CD8-positive, alpha-beta T cell (primary cell): ENCODE measurements at regions of chr10 and their contacts with region 1.

Region 1: DNA sequence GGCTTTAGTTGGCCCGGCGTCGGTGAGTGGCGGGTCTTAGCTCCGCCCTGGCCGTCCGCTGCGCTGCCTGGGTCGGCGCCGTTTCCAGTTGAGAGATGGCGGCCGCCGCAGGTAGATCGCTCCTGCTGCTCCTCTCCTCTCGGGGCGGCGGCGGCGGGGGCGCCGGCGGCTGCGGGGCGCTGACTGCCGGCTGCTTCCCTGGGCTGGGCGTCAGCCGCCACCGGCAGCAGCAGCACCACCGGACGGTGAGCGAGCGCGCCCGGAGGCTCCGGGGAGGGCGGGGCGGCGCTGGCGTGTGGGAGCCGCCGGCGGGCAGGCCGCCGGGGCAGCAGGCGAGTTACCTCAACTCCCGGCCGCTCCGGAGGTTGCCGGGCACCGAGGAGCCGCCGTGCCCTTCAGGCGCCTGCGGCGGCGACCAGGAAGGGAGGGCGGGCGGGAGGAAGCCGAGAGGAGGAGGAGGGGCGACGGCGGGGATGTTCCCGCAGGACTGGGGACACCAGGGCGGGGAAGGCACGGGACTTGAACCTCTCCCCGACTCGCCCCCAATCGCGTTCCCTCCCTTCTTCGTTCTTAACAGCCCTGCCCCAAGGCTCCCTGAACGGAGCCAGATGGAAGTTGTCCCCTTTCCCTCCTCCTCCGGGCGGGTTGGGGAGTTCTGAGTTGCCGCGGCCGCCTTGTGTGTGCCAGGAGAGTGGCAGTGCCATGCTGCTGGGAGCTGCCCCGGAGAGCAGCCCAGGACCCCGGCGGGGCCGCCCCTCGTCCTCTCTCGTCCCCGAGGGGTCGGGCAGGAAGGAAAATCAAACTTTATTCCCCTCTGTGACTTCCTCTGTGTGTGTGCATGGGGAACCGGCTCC is at the start of gene MCU:
- DNase-seq: peak; percentile 85 to 96 (median 92)
- ATAC-seq: peak; percentile 95
- H3K4me3 ChIP-seq: peak within 1 kb of the TSS; percentile 84 to 89
- H3K4me3 Mint-ChIP-seq: peak within 1 kb of the TSS; percentile 92
- H3K27ac ChIP-seq: peak within 1 kb of the TSS; percentile 37 to 45
- H3K27ac Mint-ChIP-seq: peak within 1 kb of the TSS; percentile 88
- H3K4me1 ChIP-seq: peaks cover 18% of the 10 kb centered on the region
- H3K4me1 Mint-ChIP-seq: peaks cover 33% of the 10 kb centered on the region
- H3K27me3 ChIP-seq: no peaks in the 10 kb centered on the region
- H3K27me3 Mint-ChIP-seq: peaks cover 4% of the 10 kb centered on the region
- CTCF ChIP-seq: no peak
- total RNA-seq, gene MCU: 6.7 to 7.2 TPM

Region 2: DNA sequence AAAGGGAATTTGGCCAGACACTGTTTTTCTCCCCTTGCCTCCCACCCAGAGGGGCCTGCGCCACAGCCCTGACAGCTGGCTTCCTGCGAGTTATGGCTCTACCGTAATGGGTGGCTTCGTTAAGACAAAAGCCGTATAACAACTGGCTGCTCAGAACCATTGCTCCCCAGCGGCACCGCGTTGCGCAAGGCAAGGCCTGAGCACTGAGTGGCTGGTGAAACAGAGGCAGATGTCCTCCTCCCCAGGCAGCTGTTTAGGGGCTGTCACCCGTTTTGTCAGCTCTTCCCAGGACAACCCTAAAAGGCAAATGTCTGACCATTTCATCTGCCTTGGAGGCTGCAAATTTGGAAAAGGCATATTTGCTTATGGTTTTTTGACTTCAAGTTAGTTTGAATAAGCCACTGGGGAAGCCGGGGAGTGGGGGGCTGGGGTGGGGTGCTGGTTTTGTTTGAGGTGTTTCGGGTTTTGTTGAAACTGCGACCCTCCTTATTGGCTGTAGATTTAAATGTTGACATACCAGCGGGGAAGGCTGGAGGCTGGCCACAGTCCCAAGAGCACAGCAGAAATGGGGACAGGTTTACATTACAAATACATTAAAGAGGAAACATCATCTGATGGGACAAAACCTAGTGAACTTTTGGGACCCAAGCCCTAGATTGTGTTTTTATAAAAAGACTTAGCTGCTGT is 603.3 kb before region 1 on chr10:
- CTCF ChIA-PET with region 1: no interaction called
- POLR2A ChIA-PET with region 1: no interaction called
- intact Hi-C with region 1: loop called in 1 of 2 experiments (anchors 5 kb)
- DNase-seq: peak in 8 of 9 experiments; percentile 37 to 84 (median 71)
- ATAC-seq: peak; percentile 56
- H3K4me3 ChIP-seq: peak overlapping the region; percentile 96 to 98
- H3K4me3 Mint-ChIP-seq: peak overlapping the region; percentile 100
- H3K27ac ChIP-seq: peak overlapping the region; percentile 96 to 98
- H3K27ac Mint-ChIP-seq: peak overlapping the region; percentile 99
- H3K4me1 ChIP-seq: peaks cover 45% of the 10 kb centered on the region
- H3K4me1 Mint-ChIP-seq: peaks cover 49% of the 10 kb centered on the region
- H3K27me3 ChIP-seq: no peaks in the 10 kb centered on the region
- H3K27me3 Mint-ChIP-seq: no peaks in the 10 kb centered on the region
- CTCF ChIP-seq: no peak

Region 3: DNA sequence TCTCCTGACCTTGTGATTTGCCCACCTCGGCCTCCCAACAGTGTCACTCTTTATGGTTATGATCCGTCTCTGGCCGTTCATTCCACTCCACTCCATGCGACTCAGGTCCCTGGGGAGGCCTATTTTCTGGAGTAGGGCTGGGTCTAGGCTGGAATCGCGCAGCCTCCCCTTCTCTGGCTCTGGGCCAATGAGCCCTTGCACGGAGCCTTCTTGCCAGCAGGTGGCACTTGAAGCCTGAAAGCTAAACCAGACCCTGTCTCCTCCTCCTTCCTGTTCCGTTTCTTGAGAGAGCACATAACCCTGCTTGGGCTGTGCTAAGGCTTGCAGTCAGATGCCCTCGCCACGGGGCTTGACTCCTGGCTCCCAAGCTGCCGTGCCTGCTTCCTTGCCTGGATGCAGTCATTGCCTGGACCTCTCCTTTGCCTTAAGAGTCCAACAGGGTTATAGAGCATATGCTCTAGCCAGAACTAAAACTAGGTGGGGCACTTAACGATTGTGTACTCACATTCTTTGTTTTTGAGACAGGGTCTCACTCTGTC is 328.0 kb before region 1 on chr10:
- CTCF ChIA-PET with region 1: interaction called, 6 read pairs
- POLR2A ChIA-PET with region 1: interaction called, 5 read pairs
- intact Hi-C with region 1: loop called in 1 of 2 experiments (anchors 1 kb)
- DNase-seq: peak; percentile 73 to 91 (median 85)
- ATAC-seq: peak; percentile 100
- H3K4me3 ChIP-seq: peak overlapping the region; percentile 11 to 12
- H3K4me3 Mint-ChIP-seq: peak overlapping the region; percentile 44
- H3K27ac ChIP-seq: peak overlapping the region in 1 of 2 experiments; percentile 30
- H3K27ac Mint-ChIP-seq: peak overlapping the region; percentile 84
- H3K4me1 ChIP-seq: peaks cover 9% of the 10 kb centered on the region
- H3K4me1 Mint-ChIP-seq: peaks cover 16% of the 10 kb centered on the region
- H3K27me3 ChIP-seq: no peaks in the 10 kb centered on the region
- H3K27me3 Mint-ChIP-seq: no peaks in the 10 kb centered on the region
- CTCF ChIP-seq: peak; percentile 68

Region 4: GRCh38 chr10:72834183-72834825 is 142.0 kb after region 1 on chr10:
- CTCF ChIA-PET with region 1: no interaction called
- POLR2A ChIA-PET with region 1: no interaction called
- intact Hi-C with region 1: loop called (anchors 5 to 10 kb)
- DNase-seq: peak in 7 of 9 experiments; percentile 9 to 75 (median 34)
- ATAC-seq: peak; percentile 71
- H3K4me3 ChIP-seq: no peak overlapping the region
- H3K4me3 Mint-ChIP-seq: no peak overlapping the region
- H3K27ac ChIP-seq: no peak overlapping the region
- H3K27ac Mint-ChIP-seq: no peak overlapping the region
- H3K4me1 ChIP-seq: no peaks in the 10 kb centered on the region
- H3K4me1 Mint-ChIP-seq: peaks cover 2% of the 10 kb centered on the region
- H3K27me3 ChIP-seq: no peaks in the 10 kb centered on the region
- H3K27me3 Mint-ChIP-seq: no peaks in the 10 kb centered on the region
- CTCF ChIP-seq: peak; percentile 64

Region 5: GRCh38 chr10:73167783-73168464 is 475.6 kb after region 1 on chr10 and contains the starts of genes ECD and FAM149B1:
- CTCF ChIA-PET with region 1: no interaction called
- POLR2A ChIA-PET with region 1: no interaction called
- intact Hi-C with region 1: loop called (anchors 2 to 10 kb)
- DNase-seq: peak; percentile 74 to 96 (median 91)
- ATAC-seq: peak; percentile 93
- H3K4me3 ChIP-seq: peak within 1 kb of the TSS; percentile 77 to 92
- H3K4me3 Mint-ChIP-seq: peak within 1 kb of the TSS; percentile 100
- H3K27ac ChIP-seq: peak within 1 kb of the TSS; percentile 93 to 97
- H3K27ac Mint-ChIP-seq: peak within 1 kb of the TSS; percentile 100
- H3K4me1 ChIP-seq: peaks cover 29% of the 10 kb centered on the region
- H3K4me1 Mint-ChIP-seq: peaks cover 42% of the 10 kb centered on the region
- H3K27me3 ChIP-seq: no peaks in the 10 kb centered on the region
- H3K27me3 Mint-ChIP-seq: no peaks in the 10 kb centered on the region
- CTCF ChIP-seq: peak; percentile 16
- total RNA-seq, gene ECD: 56.5 to 59.1 TPM
- total RNA-seq, gene FAM149B1: 5.9 to 6.3 TPM

Region 6: GRCh38 chr10:73252445-73253224 is 560.4 kb after region 1 on chr10 and contains the start of gene MRPS16:
- CTCF ChIA-PET with region 1: no interaction called
- POLR2A ChIA-PET with region 1: no interaction called
- intact Hi-C with region 1: loop called (anchors 5 kb)
- DNase-seq: peak; percentile 86 to 97 (median 93)
- ATAC-seq: peak; percentile 90
- H3K4me3 ChIP-seq: peak within 1 kb of the TSS; percentile 87 to 96
- H3K4me3 Mint-ChIP-seq: peak within 1 kb of the TSS; percentile 99
- H3K27ac ChIP-seq: peak within 1 kb of the TSS; percentile 80 to 94
- H3K27ac Mint-ChIP-seq: peak within 1 kb of the TSS; percentile 96
- H3K4me1 ChIP-seq: peaks cover 19% of the 10 kb centered on the region
- H3K4me1 Mint-ChIP-seq: peaks cover 46% of the 10 kb centered on the region
- H3K27me3 ChIP-seq: no peaks in the 10 kb centered on the region
- H3K27me3 Mint-ChIP-seq: no peaks in the 10 kb centered on the region
- CTCF ChIP-seq: no peak
- total RNA-seq, gene MRPS16: 23.6 to 28.7 TPM